ENCODE measurements at regions of chr6 and their contacts with region 1.

Region 1: DNA sequence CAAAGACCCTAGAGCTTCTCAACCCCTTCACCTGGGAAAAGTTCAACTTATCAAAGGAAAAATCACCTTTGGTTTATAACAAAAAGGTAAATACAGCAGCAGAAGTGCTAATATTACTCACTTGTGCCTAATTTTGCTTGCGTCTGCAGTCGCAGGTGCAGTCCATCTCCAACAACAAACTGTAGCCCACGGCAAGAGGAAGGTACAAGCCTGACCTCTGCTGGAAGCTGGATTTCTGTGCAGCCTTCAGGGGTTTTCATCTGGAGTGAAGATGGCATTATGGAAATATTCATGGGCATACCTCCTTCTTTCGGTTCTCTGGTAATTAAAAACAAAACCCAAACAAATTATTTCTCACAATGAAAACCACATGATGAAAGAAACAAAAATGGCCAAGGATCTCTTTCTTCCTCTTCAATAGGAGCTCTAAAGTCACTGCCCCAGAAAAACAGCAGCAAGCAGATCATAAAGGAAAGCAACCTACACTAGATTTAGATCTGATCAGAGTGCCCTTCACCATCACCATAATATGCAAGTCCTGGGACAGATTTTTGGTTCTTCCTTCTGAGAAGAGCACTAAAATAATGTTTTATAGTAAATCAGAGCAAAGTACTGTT is 7.8 kb downstream of the UBE3D start:
- DNase-seq: peak; percentile 22
- ATAC-seq: peak; percentile 73
- H3K4me3 ChIP-seq: no peak overlapping the region
- H3K27ac ChIP-seq: no peak overlapping the region
- H3K4me1 ChIP-seq: no peaks in the 10 kb centered on the region
- H3K27me3 ChIP-seq: no peaks in the 10 kb centered on the region
- CTCF ChIP-seq: peak; percentile 53 to 82 (median 78); a peak in 5 of 6 replicates
- POLR2A ChIP-seq: no peak
- RAD21 ChIP-seq: peak; percentile 80

Region 2: GRCh38 chr6:82247634-82248232 is 810.1 kb before region 1 on chr6 and contains the start of gene IBTK:
- CTCF ChIA-PET with region 1: interaction called, 4 read pairs
- POLR2A ChIA-PET with region 1: interaction called, 3 read pairs
- RAD21 ChIA-PET with region 1: interaction called in 1 of 2 experiments, 3 read pairs
- intact Hi-C with region 1: loop called (anchors 1 kb)
- DNase-seq: peak; percentile 86
- ATAC-seq: peak; percentile 80
- H3K4me3 ChIP-seq: peak within 1 kb of the TSS; percentile 86 to 90
- H3K27ac ChIP-seq: peak within 1 kb of the TSS; percentile 72
- H3K4me1 ChIP-seq: peaks cover 14 to 27% of the 10 kb centered on the region in 2 experiments
- H3K27me3 ChIP-seq: no peaks in the 10 kb centered on the region
- CTCF ChIP-seq: no peak
- POLR2A ChIP-seq: no peak
- RAD21 ChIP-seq: no peak
- total RNA-seq, gene IBTK: 36.6 TPM

Region 3: DNA sequence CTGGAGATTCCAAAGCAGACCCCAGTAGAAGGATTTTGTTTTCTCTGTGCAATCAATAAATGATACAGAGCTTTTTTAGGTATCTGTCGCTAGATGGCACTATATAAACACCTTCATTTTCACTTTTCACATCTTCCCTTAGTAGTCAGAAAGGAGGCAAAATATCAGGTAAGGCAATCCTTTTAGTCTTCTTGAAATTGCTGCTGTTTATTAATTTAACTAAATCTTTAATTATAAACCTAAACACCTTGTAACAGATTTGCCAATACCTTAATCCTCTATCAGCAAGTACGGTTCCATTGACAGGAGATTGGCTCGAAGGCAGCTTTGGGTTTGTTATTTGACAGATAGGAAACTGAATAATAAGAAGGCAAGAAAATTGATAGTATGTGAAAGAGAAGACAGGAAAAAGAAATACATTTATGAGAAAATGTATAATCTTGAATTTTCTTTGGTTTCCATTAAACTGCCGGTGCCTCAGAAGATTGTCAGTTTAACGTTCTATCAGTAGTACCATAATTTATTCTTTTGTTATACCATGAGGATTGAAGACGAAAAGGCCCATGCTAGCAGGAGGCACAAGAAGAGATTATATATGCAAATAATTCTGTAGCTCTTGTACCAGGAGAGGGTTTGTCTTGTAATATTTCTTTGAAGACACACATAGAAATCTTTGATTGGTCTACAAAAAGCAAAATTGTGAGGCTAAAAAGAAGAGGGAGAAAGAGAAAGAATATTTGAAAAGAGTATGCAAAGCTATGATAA is 786.8 kb before region 1 on chr6:
- CTCF ChIA-PET with region 1: interaction called, 10 read pairs
- POLR2A ChIA-PET with region 1: no interaction called
- RAD21 ChIA-PET with region 1: interaction called in 1 of 2 experiments, 3 read pairs
- intact Hi-C with region 1: loop called (anchors 1 kb)
- DNase-seq: peak; percentile 24
- ATAC-seq: peak; percentile 64
- H3K4me3 ChIP-seq: no peak overlapping the region
- H3K27ac ChIP-seq: no peak overlapping the region
- H3K4me1 ChIP-seq: peaks cover 4 to 15% of the 10 kb centered on the region in 2 experiments; a peak in 3 of 4 replicates
- H3K27me3 ChIP-seq: no peaks in the 10 kb centered on the region
- CTCF ChIP-seq: peak; percentile 43 to 76 (median 75); a peak in 5 of 6 replicates
- POLR2A ChIP-seq: no peak
- RAD21 ChIP-seq: peak; percentile 81

Region 4: GRCh38 chr6:82363351-82364086 is 694.3 kb before region 1 on chr6 and contains the start of gene TPBG:
- CTCF ChIA-PET with region 1: no interaction called
- POLR2A ChIA-PET with region 1: no interaction called
- RAD21 ChIA-PET with region 1: no interaction called
- intact Hi-C with region 1: loop called (anchors 5 kb)
- DNase-seq: peak; percentile 47
- ATAC-seq: peak; percentile 74
- H3K4me3 ChIP-seq: peak within 1 kb of the TSS; percentile 82 to 87
- H3K27ac ChIP-seq: peak within 1 kb of the TSS; percentile 92
- H3K4me1 ChIP-seq: peaks cover 12 to 19% of the 10 kb centered on the region in 2 experiments; a peak in 3 of 4 replicates
- H3K27me3 ChIP-seq: no peaks in the 10 kb centered on the region
- CTCF ChIP-seq: peak in 2 of 3 experiments; percentile 34 to 37; a peak in 2 of 6 replicates
- POLR2A ChIP-seq: peak; percentile 38
- RAD21 ChIP-seq: no peak; the same call in 1 of the 2 replicates
- total RNA-seq, gene TPBG: 28.4 TPM

Region 5: DNA sequence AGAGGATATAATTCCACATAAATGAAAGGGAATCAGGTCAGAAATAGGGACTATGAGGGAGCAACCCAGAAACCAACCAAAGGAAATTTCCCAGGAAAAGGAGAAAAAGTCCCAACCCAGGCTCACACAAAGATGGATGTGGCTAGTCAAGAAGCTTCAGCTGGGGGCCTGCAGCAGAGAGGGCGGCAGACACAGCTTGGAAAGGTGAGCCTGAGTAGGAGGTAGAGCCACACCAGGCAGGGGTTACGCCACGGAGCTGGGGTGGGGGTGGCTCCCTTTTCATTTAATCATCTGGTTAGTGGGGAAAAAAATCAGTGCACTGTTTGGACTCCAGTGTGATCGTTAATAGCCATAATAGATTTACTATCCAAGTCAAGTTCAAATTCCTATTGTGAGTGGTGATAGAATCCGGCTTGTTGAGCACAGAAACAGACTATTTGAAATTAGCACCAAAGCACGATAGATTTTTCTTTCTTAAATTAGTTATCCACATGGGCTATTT is 473.6 kb before region 1 on chr6:
- CTCF ChIA-PET with region 1: no interaction called
- POLR2A ChIA-PET with region 1: no interaction called
- RAD21 ChIA-PET with region 1: no interaction called
- intact Hi-C with region 1: no loop called
- DNase-seq: no peak
- ATAC-seq: no peak
- H3K4me3 ChIP-seq: no peak overlapping the region
- H3K27ac ChIP-seq: no peak overlapping the region
- H3K4me1 ChIP-seq: peaks cover under 1 to 1% of the 10 kb centered on the region in 2 experiments; a peak in 3 of 4 replicates
- H3K27me3 ChIP-seq: no peaks in the 10 kb centered on the region
- CTCF ChIP-seq: no peak
- POLR2A ChIP-seq: no peak
- RAD21 ChIP-seq: no peak

Region 6: GRCh38 chr6:82597201-82597600 is 460.6 kb before region 1 on chr6:
- CTCF ChIA-PET with region 1: no interaction called
- POLR2A ChIA-PET with region 1: no interaction called
- RAD21 ChIA-PET with region 1: no interaction called
- intact Hi-C with region 1: loop called (anchors 5 kb)
- DNase-seq: no peak
- ATAC-seq: no peak
- H3K4me3 ChIP-seq: no peak overlapping the region
- H3K27ac ChIP-seq: no peak overlapping the region
- H3K4me1 ChIP-seq: no peaks in the 10 kb centered on the region
- H3K27me3 ChIP-seq: no peaks in the 10 kb centered on the region
- CTCF ChIP-seq: no peak
- POLR2A ChIP-seq: no peak
- RAD21 ChIP-seq: no peak

Measured in HCT116 (cell line).